Activated CD8-positive, alpha-beta T cell treated with anti-CD3 and anti-CD28 coated beads for 36 hours (primary cell): ENCODE measurements at regions of chr15 and their contacts with region 1.

Region 1: DNA sequence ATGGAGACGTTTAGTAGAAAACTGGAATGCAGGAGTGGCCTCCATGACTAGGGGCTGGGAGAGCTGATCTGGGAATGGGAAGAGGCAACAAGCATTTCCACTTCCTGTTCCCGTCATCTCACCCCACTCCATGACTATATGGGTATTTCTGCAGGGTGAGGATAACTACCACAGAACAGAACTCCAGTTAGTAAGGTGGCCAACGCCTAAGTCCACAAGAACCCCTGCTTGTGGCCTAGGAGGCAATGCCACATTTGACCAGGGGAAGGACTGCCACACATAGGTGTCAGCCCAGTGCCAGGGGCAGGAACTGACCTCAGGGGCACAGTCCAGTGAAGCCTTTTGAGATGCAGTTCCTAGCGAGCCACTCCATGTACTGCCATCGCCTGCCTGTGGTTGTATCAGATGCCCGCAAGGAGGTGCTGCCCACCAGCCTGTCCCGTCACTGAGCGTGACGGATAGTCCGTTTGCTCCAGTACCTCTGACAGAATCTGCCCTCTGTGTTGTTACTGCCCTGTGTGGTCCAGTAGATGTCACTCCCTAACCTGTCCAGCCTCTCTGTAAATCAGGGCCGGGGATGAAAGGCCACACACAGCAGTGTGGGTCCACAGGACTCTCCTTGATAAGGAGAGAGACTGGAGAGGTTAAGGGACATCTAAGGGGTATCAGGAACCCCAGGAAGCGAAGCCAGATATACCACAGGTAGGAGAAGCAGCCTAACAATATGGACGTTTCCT is 3.5 kb upstream of the MTFMT start:
- DNase-seq: peak; percentile 66
- ATAC-seq: peak; percentile 45
- H3K4me3 Mint-ChIP-seq: no peak overlapping the region
- H3K27ac Mint-ChIP-seq: no peak overlapping the region
- H3K4me1 Mint-ChIP-seq: peaks cover 11% of the 10 kb centered on the region
- H3K27me3 Mint-ChIP-seq: peaks cover 3% of the 10 kb centered on the region
- CTCF ChIP-seq: peak; percentile 56

Region 2: DNA sequence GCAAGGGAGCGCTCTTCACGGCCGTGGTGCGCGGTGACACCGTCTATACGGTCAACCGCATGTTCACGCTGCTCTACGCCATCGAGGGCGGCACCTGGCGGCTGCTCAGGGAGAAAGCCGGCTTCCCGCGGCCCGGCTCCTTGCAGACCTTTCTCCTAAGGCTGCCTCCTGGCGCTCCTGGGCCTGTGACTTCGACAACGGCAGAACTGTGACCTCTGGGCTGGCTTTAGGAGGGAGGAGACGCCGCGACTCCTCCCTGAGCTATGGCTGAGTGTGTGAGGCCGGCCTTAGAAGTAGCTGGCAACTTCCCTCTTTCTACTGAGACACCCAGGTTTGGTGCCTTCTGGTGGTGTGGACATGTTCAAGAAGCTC is 45.0 kb after region 1 on chr15:
- CTCF ChIA-PET with region 1: interaction called, 32 read pairs
- POLR2A ChIA-PET with region 1: no interaction called
- intact Hi-C with region 1: loop called (anchors 5 kb)
- DNase-seq: peak; percentile 69
- ATAC-seq: peak; percentile 37
- H3K4me3 Mint-ChIP-seq: no peak overlapping the region
- H3K27ac Mint-ChIP-seq: no peak overlapping the region
- H3K4me1 Mint-ChIP-seq: peaks cover 21% of the 10 kb centered on the region
- H3K27me3 Mint-ChIP-seq: peaks cover 37% of the 10 kb centered on the region
- CTCF ChIP-seq: peak; percentile 60

Region 3: DNA sequence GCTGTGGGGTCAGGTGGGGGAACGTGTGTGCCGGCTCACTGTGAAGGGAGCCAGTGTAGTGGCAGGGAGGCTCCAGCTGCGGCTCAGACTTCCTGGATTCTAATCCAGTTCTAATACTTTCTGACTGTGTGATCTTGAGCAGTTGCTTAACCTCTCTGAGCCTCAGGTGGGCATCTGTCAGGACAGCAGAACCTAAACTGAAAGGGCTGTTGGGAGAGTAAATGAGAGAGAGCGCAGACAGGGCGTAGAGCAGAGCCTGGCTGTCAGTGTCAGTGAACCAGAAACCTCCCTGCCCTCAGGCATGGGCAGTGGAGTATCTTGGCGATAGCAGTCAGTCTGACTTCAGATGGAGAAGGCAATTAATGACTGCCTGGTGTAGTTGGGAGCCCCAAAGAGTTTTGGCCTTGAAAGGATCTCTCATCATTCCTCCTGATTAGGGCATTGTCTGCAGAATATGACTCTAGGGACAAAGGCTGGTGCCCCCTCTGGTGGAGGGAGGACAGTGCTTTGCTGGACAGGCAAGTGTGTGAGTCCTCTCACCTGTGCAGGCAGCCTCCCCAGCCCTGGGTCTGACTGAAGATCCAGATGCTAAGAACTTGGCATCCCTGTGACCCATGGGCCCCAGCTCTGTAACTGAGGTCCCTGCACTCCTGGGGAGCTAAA is 53.2 kb after region 1 on chr15:
- CTCF ChIA-PET with region 1: interaction called, 17 read pairs
- POLR2A ChIA-PET with region 1: no interaction called
- intact Hi-C with region 1: no loop called
- DNase-seq: peak; percentile 51
- ATAC-seq: no peak
- H3K4me3 Mint-ChIP-seq: no peak overlapping the region
- H3K27ac Mint-ChIP-seq: no peak overlapping the region
- H3K4me1 Mint-ChIP-seq: peaks cover 18% of the 10 kb centered on the region
- H3K27me3 Mint-ChIP-seq: peaks cover 19% of the 10 kb centered on the region
- CTCF ChIP-seq: peak; percentile 13

Region 4: DNA sequence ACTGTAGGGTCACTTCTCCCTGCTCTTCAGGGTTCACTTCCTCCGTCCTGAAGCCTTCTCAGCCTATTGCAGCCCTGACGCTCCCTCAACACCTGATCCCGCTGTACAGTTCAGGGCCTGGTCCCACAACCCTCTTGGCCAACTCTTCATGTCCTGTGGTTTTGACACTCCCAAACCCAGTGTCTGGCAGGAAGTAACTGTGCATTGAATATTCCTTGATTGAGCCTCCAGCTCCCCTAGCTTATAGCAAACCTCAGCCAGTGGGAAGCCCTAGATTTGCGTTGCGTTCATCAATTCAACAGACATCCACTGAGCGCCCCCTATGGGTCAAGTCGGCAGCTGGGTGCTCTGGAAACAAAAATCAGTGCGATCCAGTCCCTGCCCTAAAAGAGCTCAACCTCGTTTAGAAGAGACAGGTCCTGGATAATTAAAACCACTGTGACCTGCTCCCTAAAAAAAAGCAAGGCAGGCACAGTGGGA is 68.5 kb after region 1 on chr15:
- CTCF ChIA-PET with region 1: interaction called, 17 read pairs
- POLR2A ChIA-PET with region 1: no interaction called
- intact Hi-C with region 1: no loop called
- DNase-seq: peak; percentile 75
- ATAC-seq: peak; percentile 53
- H3K4me3 Mint-ChIP-seq: no peak overlapping the region
- H3K27ac Mint-ChIP-seq: no peak overlapping the region
- H3K4me1 Mint-ChIP-seq: peaks cover 5% of the 10 kb centered on the region
- H3K27me3 Mint-ChIP-seq: no peaks in the 10 kb centered on the region
- CTCF ChIP-seq: peak; percentile 81

Region 5: GRCh38 chr15:65212097-65212496 is 179.1 kb after region 1 on chr15:
- CTCF ChIA-PET with region 1: no interaction called
- POLR2A ChIA-PET with region 1: no interaction called
- intact Hi-C with region 1: no loop called
- DNase-seq: peak; percentile 84
- ATAC-seq: peak; percentile 96
- H3K4me3 Mint-ChIP-seq: no peak overlapping the region
- H3K27ac Mint-ChIP-seq: no peak overlapping the region
- H3K4me1 Mint-ChIP-seq: peaks cover 5% of the 10 kb centered on the region
- H3K27me3 Mint-ChIP-seq: no peaks in the 10 kb centered on the region
- CTCF ChIP-seq: peak; percentile 61

Region 6: DNA sequence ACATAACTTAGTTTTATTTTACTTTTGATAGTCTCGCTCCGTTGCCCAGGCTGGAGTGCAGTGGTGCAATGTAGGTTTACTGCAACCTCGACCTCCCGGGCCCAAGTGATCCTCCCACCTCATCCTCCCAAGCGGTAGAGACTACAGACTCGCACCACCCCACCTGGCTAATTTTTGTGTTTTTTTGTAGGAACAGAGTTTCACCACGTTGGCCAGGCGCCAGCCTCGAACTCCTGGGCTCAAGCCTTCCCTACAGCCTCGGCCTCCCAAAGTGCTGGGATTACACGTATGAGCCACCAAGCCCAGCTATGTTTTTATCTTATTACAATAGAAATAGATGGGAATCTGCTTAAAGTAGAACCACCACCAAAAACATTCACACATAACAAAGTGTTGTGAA is 265.8 kb after region 1 on chr15:
- CTCF ChIA-PET with region 1: interaction called, 3 read pairs
- POLR2A ChIA-PET with region 1: interaction called, 4 read pairs
- intact Hi-C with region 1: loop called (anchors 5 kb)
- DNase-seq: no peak
- ATAC-seq: no peak
- H3K4me3 Mint-ChIP-seq: peak overlapping the region; percentile 81
- H3K27ac Mint-ChIP-seq: peak overlapping the region; percentile 87
- H3K4me1 Mint-ChIP-seq: peaks cover 34% of the 10 kb centered on the region
- H3K27me3 Mint-ChIP-seq: no peaks in the 10 kb centered on the region
- CTCF ChIP-seq: no peak